Activated T-helper 1 cell treated with anti-CD3 and anti-CD28 coated beads, Interleukin-12 subunit alpha, Interleukin-12 subunit beta, Interleukin-2, Interleukin-4 antibody, amounts not matched to agents 30 ng/mL and 10 ng/mL and 1 ng/mL, durations not matched to agents 14 hours and 24 hours and 36 hours (primary cell): ENCODE measurements at regions of chr7 and their contacts with region 1.

Region 1: DNA sequence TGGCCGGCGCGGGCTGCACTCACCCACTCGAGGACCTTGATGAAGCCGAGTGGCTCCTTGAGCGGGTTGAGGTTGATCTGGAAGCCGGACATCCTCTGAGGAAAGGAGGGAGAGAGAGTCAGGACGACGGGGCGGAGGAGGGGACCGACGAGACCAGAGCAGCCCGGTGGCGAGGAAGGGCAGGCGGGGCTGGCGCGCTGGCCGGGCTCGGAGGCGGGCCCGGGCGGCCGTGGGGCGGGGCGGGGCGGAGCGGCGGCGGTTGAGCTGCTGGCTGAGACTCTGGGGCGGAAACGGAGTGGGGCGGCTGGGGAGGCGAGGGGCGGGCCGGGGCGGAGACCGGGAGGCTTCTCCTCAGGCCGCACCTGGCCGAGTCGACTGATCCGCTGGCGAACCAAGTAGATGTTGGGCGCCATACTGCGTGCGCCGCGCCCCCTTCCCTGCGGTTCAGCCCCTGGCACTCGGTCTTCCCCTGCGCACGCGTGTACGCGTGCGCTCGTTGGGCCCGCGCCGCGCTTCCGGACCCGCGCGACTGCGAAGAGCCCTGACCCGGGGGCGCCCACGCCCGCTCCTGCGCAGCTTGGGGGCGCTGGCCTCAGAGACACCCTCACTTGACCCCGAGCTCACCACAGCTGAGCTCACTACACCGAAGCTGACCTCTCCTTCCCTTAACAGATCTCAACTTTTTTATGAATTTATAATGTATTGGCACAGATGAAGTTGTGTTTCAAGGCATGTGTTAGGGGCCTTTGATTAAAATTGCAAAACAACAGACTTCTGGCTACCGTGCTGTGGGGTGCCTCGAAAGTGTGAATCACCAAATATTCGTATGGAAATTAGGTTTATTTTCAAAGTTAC is at the start of gene SYPL1:
- DNase-seq: peak; percentile 86
- H3K4me3 Mint-ChIP-seq: peak within 1 kb of the TSS; percentile 86
- H3K27ac Mint-ChIP-seq: peak within 1 kb of the TSS; percentile 88
- H3K4me1 Mint-ChIP-seq: peaks cover 47% of the 10 kb centered on the region
- H3K27me3 Mint-ChIP-seq: no peaks in the 10 kb centered on the region
- total RNA-seq, gene SYPL1: 22.3 and 24.9 TPM in 2 replicates

Region 2: GRCh38 chr7:104156842-104157277 is 1955.5 kb before region 1 on chr7:
- intact Hi-C with region 1: no loop called
- DNase-seq: no peak
- H3K4me3 Mint-ChIP-seq: no peak overlapping the region
- H3K27ac Mint-ChIP-seq: no peak overlapping the region
- H3K4me1 Mint-ChIP-seq: no peaks in the 10 kb centered on the region
- H3K27me3 Mint-ChIP-seq: no peaks in the 10 kb centered on the region

Region 3: GRCh38 chr7:105691733-105692564 is 420.4 kb before region 1 on chr7:
- intact Hi-C with region 1: loop called (anchors 1 kb)
- DNase-seq: no peak
- H3K4me3 Mint-ChIP-seq: peak overlapping the region; percentile 89
- H3K27ac Mint-ChIP-seq: peak overlapping the region; percentile 89
- H3K4me1 Mint-ChIP-seq: peaks cover 35% of the 10 kb centered on the region
- H3K27me3 Mint-ChIP-seq: no peaks in the 10 kb centered on the region

Region 4: GRCh38 chr7:106071356-106071998 is 40.9 kb before region 1 on chr7:
- intact Hi-C with region 1: loop called (anchors 1 kb)
- DNase-seq: peak; percentile 44
- H3K4me3 Mint-ChIP-seq: peak overlapping the region; percentile 59
- H3K27ac Mint-ChIP-seq: peak overlapping the region; percentile 93
- H3K4me1 Mint-ChIP-seq: peaks cover 42% of the 10 kb centered on the region
- H3K27me3 Mint-ChIP-seq: no peaks in the 10 kb centered on the region

Region 5: GRCh38 chr7:106127984-106128780 is 15.8 kb after region 1 on chr7:
- intact Hi-C with region 1: no loop called
- DNase-seq: no peak
- H3K4me3 Mint-ChIP-seq: no peak overlapping the region
- H3K27ac Mint-ChIP-seq: no peak overlapping the region
- H3K4me1 Mint-ChIP-seq: peaks cover 8% of the 10 kb centered on the region
- H3K27me3 Mint-ChIP-seq: peaks cover 16% of the 10 kb centered on the region

Region 6: DNA sequence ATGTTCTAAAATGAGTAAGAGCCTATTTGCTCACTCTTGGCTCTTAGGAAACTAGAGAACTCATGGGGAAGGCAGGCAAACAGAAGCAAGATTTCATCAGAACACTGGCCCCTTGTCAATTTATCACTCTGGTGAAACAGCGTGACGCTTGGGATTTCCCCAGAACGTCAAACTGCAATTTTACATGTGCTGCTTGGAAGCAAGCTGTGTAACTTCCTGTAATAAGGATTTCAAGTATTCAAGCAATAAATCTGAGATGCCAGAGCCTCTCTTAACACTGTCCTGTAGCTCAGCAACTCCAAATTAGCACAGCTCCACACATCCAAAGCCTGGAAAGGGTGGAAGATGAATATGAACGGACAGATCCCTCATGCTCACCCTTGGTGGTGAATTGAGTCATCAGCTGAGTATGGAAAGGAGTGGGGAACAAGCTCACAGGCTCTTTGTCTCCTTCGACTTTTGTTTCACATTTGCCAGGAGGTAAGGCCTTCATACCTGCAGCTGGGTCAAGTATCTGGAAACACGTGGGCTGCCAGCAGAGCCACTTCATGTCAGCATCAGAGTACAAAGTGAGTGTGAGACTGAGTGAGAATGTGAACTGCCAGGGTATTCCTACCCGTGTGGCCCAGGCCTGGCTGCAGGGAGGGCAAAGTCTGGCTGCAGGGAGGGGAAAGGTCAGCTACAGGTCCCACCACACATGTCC is 312.8 kb after region 1 on chr7:
- intact Hi-C with region 1: loop called (anchors 5 kb)
- DNase-seq: peak; percentile 67
- H3K4me3 Mint-ChIP-seq: peak overlapping the region; percentile 67
- H3K27ac Mint-ChIP-seq: peak overlapping the region; percentile 97
- H3K4me1 Mint-ChIP-seq: peaks cover 91% of the 10 kb centered on the region
- H3K27me3 Mint-ChIP-seq: no peaks in the 10 kb centered on the region